ENCODE measurements at regions of chr2 and their contacts with region 1.

Region 1: DNA sequence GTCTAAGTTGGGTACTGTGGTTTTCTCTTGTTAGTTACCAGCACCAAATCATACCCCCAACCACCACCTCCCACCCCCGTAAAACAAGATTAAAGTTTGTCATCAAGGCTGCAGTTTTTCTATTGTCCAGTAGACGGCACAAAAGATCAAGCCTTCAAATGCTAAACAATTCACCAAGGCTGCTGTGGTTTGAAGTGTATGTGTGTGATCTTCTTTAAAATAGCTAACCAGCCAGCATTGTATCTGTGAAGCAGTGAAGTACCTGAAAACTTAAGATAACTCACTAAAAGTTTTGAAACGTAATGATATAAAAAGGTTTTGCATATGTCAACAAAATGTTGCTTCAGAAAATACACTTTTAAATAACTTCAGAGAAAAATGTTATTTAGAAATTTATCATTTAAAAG is 5.9 kb upstream of the MEIS1 start:
- DNase-seq: no peak
- H3K4me3 ChIP-seq: no peak overlapping the region
- CTCF ChIP-seq: peak; percentile 72

Region 2: GRCh38 chr2:66439812-66440542 is 10.9 kb after region 1 on chr2:
- CTCF ChIA-PET with region 1: interaction called, 11 read pairs
- POLR2A ChIA-PET with region 1: interaction called, 55 read pairs
- DNase-seq: no peak
- H3K4me3 ChIP-seq: peak overlapping the region; percentile 67
- CTCF ChIP-seq: no peak

Region 3: GRCh38 chr2:67215214-67216055 is 786.4 kb after region 1 on chr2:
- CTCF ChIA-PET with region 1: interaction called, 13 read pairs
- POLR2A ChIA-PET with region 1: interaction called, 5 read pairs
- DNase-seq: peak; percentile 14
- H3K4me3 ChIP-seq: no peak overlapping the region
- CTCF ChIP-seq: peak; percentile 75

Region 4: GRCh38 chr2:67234439-67234838 is 805.4 kb after region 1 on chr2:
- CTCF ChIA-PET with region 1: interaction called, 38 read pairs
- POLR2A ChIA-PET with region 1: no interaction called
- DNase-seq: no peak
- H3K4me3 ChIP-seq: no peak overlapping the region
- CTCF ChIP-seq: peak; percentile 76

Measured in AG04449 (cell line).